ENCODE measurements at regions of chr4 and their contacts with region 1.

Region 1: DNA sequence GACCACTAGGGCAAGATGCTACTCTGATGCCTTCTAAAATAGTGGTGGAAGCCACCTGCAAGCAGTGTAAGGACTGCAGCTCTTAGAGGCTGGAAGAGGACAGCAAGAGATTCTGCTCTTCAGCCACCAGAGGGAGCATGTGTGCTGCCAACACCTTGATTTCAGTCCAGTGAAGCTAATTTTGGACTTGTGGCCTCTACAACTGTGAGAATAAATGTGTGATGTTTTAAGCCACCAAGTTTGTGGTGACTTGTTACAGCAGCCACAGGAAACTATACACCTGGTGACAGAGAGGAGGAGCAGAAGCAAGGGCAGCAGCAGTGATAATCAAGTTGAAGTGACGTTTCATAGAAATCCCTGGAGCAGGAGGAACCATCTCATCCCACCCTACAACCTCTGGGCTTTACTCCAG is 55.9 kb downstream of the FGFBP1 start:
- DNase-seq: peak; percentile 37 to 87
- ATAC-seq: peak; percentile 89 to 98
- H3K4me3 ChIP-seq: no peak overlapping the region
- H3K27ac ChIP-seq: peak overlapping the region in 1 of 2 experiments; percentile 61; a peak in 2 of 6 replicates
- H3K4me1 ChIP-seq: 0 out of 3 replicates have a peak, but pooled peaks cover 3% of the 10 kb centered on the region
- CTCF ChIP-seq: peak; percentile 86
- EP300 ChIP-seq: no peak
- POLR2A ChIP-seq: no peak
- RAD21 ChIP-seq: peak; percentile 94 to 98

Region 2: DNA sequence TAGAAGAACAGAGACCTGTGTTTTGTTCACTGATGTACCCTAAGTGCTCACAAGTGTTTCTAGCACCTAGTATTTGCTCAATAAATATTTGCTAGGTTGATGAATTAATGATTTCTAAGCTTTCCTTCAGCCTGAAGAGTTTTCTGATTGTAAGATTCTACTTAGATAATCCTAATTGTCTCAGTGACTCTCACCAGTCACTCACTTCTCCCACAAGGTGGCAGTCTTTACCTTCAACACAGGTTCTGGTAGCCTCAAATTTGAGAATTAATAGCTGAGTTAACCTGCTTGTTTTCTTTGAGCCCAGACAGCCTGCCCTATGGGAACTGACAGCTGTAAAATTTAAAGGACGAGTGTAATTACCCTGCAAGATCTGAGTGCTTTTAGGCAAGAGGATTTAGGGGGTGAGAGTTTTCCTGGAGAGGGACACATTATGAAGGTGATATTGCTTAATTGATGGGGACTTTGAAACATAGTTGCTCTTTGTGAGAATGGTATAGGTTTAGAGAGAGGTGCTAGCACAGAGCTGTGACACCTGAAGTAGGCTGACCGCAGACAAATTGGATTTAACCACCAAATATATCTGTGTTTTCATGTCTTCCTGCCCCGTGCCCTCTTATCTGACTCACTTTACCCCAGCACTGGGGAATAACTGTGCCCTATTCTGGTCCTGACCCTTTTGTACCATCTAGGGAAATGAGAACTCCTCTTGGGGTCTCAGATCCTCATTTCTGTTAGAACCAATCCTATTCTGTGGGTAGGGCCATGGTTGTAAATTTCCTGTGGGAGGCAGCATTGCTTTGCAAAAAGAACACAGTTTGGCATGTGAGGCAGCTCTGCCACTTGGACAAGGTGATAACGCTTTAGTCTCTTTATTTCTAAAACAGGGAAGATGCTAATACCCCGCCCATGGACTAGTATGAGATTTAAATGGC is 76.8 kb before region 1 on chr4:
- CTCF ChIA-PET with region 1: interaction called, 92 read pairs
- POLR2A ChIA-PET with region 1: no interaction called
- DNase-seq: peak; percentile 17 to 64
- ATAC-seq: peak; percentile 85 to 89
- H3K4me3 ChIP-seq: no peak overlapping the region
- H3K27ac ChIP-seq: 0 out of 6 replicates have a peak overlapping the region, but pooled peaks of 1 of the 2 experiments have one; percentile 14
- H3K4me1 ChIP-seq: no peaks in the 10 kb centered on the region
- CTCF ChIP-seq: peak; percentile 74
- EP300 ChIP-seq: no peak
- POLR2A ChIP-seq: no peak
- RAD21 ChIP-seq: peak; percentile 78 to 84

Region 3: GRCh38 chr4:15893962-15894361 is 11.3 kb after region 1 on chr4:
- CTCF ChIA-PET with region 1: interaction called, 32 read pairs
- POLR2A ChIA-PET with region 1: no interaction called
- DNase-seq: peak; percentile 82 to 95
- ATAC-seq: peak; percentile 97 to 100
- H3K4me3 ChIP-seq: no peak overlapping the region
- H3K27ac ChIP-seq: peak overlapping the region; percentile 77 to 86
- H3K4me1 ChIP-seq: peaks cover 40% of the 10 kb centered on the region
- CTCF ChIP-seq: no peak
- EP300 ChIP-seq: no peak
- POLR2A ChIP-seq: no peak
- RAD21 ChIP-seq: no peak

Region 4: DNA sequence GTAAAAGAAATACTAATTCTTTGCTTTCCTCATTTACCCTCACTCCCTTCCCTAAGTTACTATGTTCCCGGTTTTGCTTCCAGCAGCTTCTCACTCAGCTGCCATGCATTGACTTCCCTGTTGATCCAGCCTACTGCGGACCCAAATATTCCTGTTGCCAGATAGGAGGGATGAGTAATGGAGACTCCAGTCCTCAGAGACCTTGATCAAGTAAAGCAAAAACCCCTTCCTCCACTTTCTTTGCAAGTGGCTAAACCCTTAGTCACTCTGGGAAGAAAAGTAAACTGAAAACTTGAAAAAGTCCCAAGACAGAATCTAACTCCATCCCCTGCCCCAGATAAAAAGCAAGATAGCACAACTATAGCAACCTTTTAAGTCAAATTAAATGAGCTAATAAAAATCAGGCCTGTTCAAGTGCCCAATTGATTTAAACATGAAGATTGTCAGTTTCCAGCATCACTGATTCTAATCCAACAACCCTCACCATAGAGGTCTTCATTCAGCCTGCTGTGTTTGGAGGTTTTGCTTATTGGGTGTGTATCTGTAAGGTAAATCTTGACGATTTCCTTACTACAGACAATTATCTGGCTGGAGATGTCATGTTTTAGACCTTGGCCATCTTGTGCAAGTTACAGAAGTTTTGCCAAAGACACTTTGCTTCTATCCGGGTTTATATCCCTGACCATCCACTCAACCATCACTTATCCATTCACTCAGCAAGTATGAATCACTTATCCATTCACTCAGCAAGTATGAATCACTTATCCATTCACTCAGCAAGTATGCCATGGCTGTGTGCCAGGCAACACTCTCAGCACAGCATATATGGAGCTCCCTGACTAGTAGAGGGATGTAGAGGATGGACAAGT is 38.3 kb after region 1 on chr4:
- CTCF ChIA-PET with region 1: interaction called, 25 read pairs
- POLR2A ChIA-PET with region 1: no interaction called
- DNase-seq: peak; percentile 63 to 90
- ATAC-seq: peak; percentile 97 to 99
- H3K4me3 ChIP-seq: no peak overlapping the region
- H3K27ac ChIP-seq: peak overlapping the region; percentile 87
- H3K4me1 ChIP-seq: peaks cover 39% of the 10 kb centered on the region
- CTCF ChIP-seq: no peak
- EP300 ChIP-seq: peak in 1 of 2 experiments; percentile 27; a peak in 1 of 5 replicates
- POLR2A ChIP-seq: no peak
- RAD21 ChIP-seq: peak in 1 of 2 experiments; percentile 16; a peak in 1 of 5 replicates

Region 5: GRCh38 chr4:15945516-15945915 is 62.8 kb after region 1 on chr4:
- CTCF ChIA-PET with region 1: interaction called, 20 read pairs
- POLR2A ChIA-PET with region 1: no interaction called
- DNase-seq: no peak
- ATAC-seq: no peak
- H3K4me3 ChIP-seq: no peak overlapping the region
- H3K27ac ChIP-seq: no peak overlapping the region
- H3K4me1 ChIP-seq: no peaks in the 10 kb centered on the region
- CTCF ChIP-seq: no peak
- EP300 ChIP-seq: no peak
- POLR2A ChIP-seq: no peak
- RAD21 ChIP-seq: no peak

Region 6: GRCh38 chr4:15976456-15977447 is 94.1 kb after region 1 on chr4:
- CTCF ChIA-PET with region 1: interaction called, 16 read pairs
- POLR2A ChIA-PET with region 1: no interaction called
- DNase-seq: no peak
- ATAC-seq: peak in 1 of 2 experiments; percentile 54; a peak in 2 of 6 replicates
- H3K4me3 ChIP-seq: no peak overlapping the region
- H3K27ac ChIP-seq: no peak overlapping the region
- H3K4me1 ChIP-seq: no peaks in the 10 kb centered on the region
- CTCF ChIP-seq: no peak
- EP300 ChIP-seq: no peak
- POLR2A ChIP-seq: no peak
- RAD21 ChIP-seq: no peak